Activated CD8-positive, alpha-beta T cell treated with anti-CD3 and anti-CD28 coated beads, Interleukin-2, amount 10 ng/mL, durations not matched to agents 7 days and 5 days (primary cell): ENCODE measurements at regions of chr10 and their contacts with region 1.

Region 1: DNA sequence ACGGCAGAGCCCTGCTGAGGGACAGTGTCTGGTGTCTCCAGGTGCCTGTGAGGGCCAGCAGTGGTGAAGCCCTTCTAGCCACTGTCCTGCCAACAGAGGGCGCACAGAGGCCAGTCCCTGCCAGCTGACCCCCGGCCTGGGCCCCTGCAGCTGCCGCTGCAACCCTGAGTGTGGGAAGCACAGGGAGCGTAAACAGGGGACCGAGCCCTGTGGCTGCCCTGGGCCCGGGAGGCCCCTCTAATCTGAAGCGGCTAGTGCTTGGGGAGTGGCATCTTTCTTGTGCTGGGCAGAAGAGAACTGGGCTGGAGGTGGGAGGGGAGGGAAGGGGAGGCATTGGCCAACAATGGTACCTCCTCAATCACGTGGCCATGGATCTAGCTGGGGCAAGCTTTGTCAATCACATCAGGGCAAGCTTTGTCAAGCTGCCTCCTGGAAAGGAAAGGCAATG is 34.6 kb downstream of the TRIM8 start:
- DNase-seq: no peak
- ATAC-seq: no peak
- H3K4me3 Mint-ChIP-seq: no peak overlapping the region
- H3K27ac Mint-ChIP-seq: no peak overlapping the region
- H3K4me1 Mint-ChIP-seq: peaks cover 48% of the 10 kb centered on the region
- H3K27me3 Mint-ChIP-seq: no peaks in the 10 kb centered on the region

Region 2: GRCh38 chr10:102660888-102661657 is 17.8 kb before region 1 on chr10:
- CTCF ChIA-PET with region 1: interaction called, 24 read pairs
- POLR2A ChIA-PET with region 1: interaction called, 13 read pairs
- DNase-seq: peak; percentile 86
- ATAC-seq: peak; percentile 91
- H3K4me3 Mint-ChIP-seq: peak overlapping the region; percentile 54
- H3K27ac Mint-ChIP-seq: peak overlapping the region; percentile 91
- H3K4me1 Mint-ChIP-seq: peaks cover 52% of the 10 kb centered on the region
- H3K27me3 Mint-ChIP-seq: no peaks in the 10 kb centered on the region